Stomach (tissue), 19 donors: ENCODE measurements at regions of chr5 and their contacts with region 1.

Region 1: DNA sequence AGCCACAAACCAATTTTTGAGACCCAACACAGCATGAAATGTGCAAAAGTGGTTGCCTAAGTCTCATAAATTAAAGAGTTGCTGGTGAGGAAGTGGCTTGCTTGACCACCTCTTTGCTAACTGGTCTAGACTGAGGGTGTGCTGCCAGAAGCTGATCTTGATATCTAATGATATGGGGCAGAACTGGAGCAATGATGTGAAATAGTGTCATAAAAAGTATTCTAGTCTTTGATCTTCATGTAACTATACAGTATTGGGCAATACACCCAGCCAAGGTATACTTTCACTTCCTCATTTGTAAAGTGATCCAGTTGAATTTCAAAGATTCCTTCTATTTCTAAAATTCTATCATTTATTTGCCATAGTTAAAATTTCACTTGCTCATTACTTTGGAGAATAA is 5.9 kb upstream of the YTHDC2 start:
- DNase-seq: no peak
- H3K4me3 ChIP-seq: no peak overlapping the region
- H3K27ac ChIP-seq: no peak overlapping the region
- H3K4me1 ChIP-seq: peaks cover 0 to 5% (median 0%) of the 10 kb centered on the region in 4 donors
- H3K27me3 ChIP-seq: peaks cover 0 to 23% (median 0%) of the 10 kb centered on the region in 3 donors
- CTCF ChIP-seq: no peak
- EP300 ChIP-seq: no peak
- POLR2A ChIP-seq: no peak

Region 2: GRCh38 chr5:113330533-113331208 is 176.9 kb before region 1 on chr5:
- intact Hi-C with region 1: no loop called
- DNase-seq: peak in 1 of 2 donors; percentile 70
- H3K4me3 ChIP-seq: no peak overlapping the region
- H3K27ac ChIP-seq: no peak overlapping the region
- H3K4me1 ChIP-seq: peaks cover 0 to 11% (median 4%) of the 10 kb centered on the region in 4 donors
- H3K27me3 ChIP-seq: peaks cover 0 to 6% (median 0%) of the 10 kb centered on the region in 3 donors
- CTCF ChIP-seq: peak in 3 of 7 experiments; percentile 21 to 29 (median 24)
- EP300 ChIP-seq: no peak
- POLR2A ChIP-seq: no peak

Region 3: GRCh38 chr5:113382731-113383130 is 124.9 kb before region 1 on chr5:
- intact Hi-C with region 1: loop called (anchors 5 kb)
- DNase-seq: no peak
- H3K4me3 ChIP-seq: no peak overlapping the region
- H3K27ac ChIP-seq: no peak overlapping the region
- H3K4me1 ChIP-seq: peaks cover 0 to 25% (median 5%) of the 10 kb centered on the region in 4 donors
- H3K27me3 ChIP-seq: no peaks in the 10 kb centered on the region
- CTCF ChIP-seq: no peak
- EP300 ChIP-seq: no peak
- POLR2A ChIP-seq: no peak

Region 4: DNA sequence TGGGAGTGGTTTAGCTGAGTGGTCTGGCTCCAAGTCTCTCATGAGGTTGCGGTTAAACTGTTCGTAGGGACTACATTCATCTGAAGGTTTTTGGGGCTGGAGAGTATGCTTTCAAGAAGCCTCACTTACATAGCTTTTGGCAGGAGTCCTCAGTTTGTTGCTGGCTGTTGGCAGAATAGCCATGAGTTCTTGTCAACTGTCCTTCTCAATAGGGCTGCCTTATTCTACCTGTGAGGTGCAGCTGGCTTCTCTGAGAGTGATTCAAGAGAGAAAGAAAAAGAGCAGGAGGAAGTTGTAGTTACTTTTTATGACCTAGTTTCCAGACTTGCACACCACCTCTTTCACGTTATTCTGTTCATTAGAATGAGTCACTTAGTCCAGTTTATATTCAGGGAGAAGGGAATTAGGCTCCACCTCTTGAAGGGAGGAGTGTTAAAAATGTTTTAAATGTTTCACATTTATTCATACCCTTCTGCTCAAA is 39.1 kb after region 1 on chr5:
- intact Hi-C with region 1: no loop called
- DNase-seq: peak in 1 of 2 donors; percentile 2
- H3K4me3 ChIP-seq: no peak overlapping the region
- H3K27ac ChIP-seq: peak overlapping the region in 1 of 5 donors; percentile 38
- H3K4me1 ChIP-seq: peaks cover 0 to 8% (median 3%) of the 10 kb centered on the region in 4 donors
- H3K27me3 ChIP-seq: no peaks in the 10 kb centered on the region
- CTCF ChIP-seq: no peak
- EP300 ChIP-seq: no peak
- POLR2A ChIP-seq: no peak